ENCODE measurements at regions of chr4 and their contacts with region 1.

Region 1: GRCh38 chr4:108570993-108571569 is 49.3 kb upstream of the RPL34 start:
- DNase-seq: no peak
- H3K4me3 ChIP-seq: no peak overlapping the region
- H3K27ac ChIP-seq: no peak overlapping the region
- H3K4me1 ChIP-seq: peaks cover 0 to 4% (median 1%) of the 10 kb centered on the region in 6 donors
- H3K27me3 ChIP-seq: peaks cover 0 to 4% (median 0%) of the 10 kb centered on the region in 7 donors
- CTCF ChIP-seq: no peak
- POLR2A ChIP-seq: no peak

Region 2: DNA sequence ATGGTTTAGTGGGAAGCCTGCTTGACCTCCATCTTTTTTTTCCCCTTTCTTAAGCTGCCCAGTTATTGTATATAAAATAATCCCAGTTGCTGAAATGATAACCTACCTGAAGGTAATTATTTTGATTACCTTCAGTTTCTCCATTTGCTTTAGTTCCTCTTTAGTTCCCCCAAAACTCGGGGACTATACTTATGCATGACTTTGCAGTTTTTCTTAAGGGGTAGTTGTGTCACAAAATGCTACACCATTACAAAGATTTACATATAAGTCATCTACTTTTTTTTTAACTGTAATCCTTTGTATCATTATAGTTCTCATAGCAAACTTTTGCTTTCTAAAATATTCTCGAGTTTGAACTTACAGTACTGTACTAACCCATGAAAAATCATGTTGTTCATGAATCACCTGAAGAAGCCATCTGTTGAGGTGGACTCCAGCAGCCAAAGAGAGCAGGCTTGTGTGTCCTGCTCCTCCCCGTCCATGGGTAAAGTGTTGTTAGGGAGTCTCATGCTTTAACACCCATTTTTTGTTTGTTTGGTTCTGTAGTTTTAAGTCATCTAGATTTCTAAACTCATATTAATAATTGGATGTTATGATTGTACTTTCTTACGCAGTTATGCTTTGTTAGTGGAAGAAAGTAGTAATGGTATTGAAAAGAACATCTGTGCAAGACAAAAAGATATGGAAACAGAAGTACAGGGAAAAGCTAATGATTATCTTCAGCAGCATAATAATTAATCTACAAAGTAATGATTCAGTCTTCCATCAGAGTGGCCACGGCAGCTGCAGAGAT is 546.8 kb before region 1 on chr4:
- intact Hi-C with region 1: loop called (anchors 5 kb)
- DNase-seq: no peak
- H3K4me3 ChIP-seq: no peak overlapping the region
- H3K27ac ChIP-seq: no peak overlapping the region
- H3K4me1 ChIP-seq: no peaks in the 10 kb centered on the region
- H3K27me3 ChIP-seq: no peaks in the 10 kb centered on the region
- CTCF ChIP-seq: no peak
- POLR2A ChIP-seq: no peak

Region 3: DNA sequence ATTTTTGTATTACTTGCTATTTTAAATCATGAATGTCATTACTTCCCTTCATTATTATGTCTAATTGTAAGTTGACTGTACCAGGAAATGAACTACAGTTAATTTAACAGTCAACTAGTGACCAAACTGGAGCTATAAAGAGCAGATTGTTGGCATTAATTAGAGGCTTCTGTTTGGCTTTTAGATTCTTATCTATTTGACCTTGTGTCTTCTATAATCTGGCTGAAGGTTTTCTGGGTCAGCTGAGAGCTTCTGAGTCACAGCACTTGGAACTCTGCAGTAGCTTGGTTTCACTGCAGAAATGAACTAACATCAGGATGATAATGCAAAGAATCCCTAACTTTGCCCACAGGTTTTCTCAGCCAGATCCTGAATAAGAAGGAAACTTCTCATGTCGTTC is 233.2 kb before region 1 on chr4:
- intact Hi-C with region 1: no loop called
- DNase-seq: no peak
- H3K4me3 ChIP-seq: no peak overlapping the region
- H3K27ac ChIP-seq: no peak overlapping the region
- H3K4me1 ChIP-seq: peaks cover 0 to 7% (median 0%) of the 10 kb centered on the region in 6 donors
- H3K27me3 ChIP-seq: no peaks in the 10 kb centered on the region
- CTCF ChIP-seq: no peak
- POLR2A ChIP-seq: no peak

Region 4: DNA sequence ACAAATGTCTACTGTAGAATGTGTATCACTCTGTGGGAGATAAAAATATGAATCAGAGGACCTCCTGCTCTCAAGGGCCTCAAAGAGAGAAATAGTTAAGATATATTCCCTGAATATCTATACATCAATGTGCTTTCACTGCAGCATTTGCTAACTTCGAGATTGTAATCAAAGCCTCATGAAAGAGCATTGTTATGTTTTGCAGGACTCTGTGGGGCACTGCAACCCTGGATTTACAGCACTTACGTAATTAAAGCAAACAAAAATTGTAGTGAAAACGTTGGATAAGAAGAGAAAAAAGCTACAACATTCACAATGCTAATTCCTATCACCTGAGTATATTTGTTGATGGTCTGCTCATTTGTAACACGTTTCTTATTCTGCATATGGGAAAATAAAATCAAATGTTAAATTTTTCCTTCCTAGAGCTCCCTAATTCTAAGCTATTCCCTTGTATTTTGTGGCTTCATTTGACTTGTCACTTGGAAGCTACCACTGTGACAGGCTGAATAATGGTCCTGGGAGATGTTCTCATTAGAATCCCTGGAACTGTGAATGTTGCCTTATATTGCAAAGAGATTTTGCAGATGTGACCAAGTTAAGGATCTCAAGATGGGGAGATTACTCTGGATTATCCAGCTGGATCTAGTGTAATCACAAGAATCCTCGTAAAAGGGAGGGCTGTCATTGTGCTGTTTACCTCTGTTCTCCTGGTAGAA is 143.9 kb after region 1 on chr4:
- intact Hi-C with region 1: no loop called
- DNase-seq: no peak
- H3K4me3 ChIP-seq: no peak overlapping the region
- H3K27ac ChIP-seq: no peak overlapping the region
- H3K4me1 ChIP-seq: no peaks in the 10 kb centered on the region
- H3K27me3 ChIP-seq: no peaks in the 10 kb centered on the region
- CTCF ChIP-seq: no peak
- POLR2A ChIP-seq: no peak

Region 5: DNA sequence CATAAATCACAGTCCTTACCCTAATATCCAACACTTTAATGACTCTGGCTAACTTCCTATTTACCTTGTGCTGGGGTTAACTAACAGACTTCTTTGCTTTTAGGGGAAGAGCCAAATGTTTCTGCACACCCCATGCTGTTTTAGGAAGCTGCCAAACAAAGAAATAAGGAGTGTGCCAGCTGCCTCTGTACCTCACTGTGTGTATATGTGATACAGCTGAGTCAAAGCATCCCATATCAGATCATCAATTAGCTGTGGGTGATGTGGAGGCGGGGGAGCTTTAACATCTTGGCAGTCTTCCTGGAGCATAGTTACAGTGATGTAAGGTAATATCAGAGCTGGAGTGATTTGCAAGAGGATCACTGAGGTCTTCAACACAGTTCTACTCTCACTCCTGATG is 636.0 kb after region 1 on chr4:
- intact Hi-C with region 1: no loop called
- DNase-seq: no peak
- H3K4me3 ChIP-seq: no peak overlapping the region
- H3K27ac ChIP-seq: no peak overlapping the region
- H3K4me1 ChIP-seq: no peaks in the 10 kb centered on the region
- H3K27me3 ChIP-seq: no peaks in the 10 kb centered on the region
- CTCF ChIP-seq: no peak
- POLR2A ChIP-seq: no peak

Measured in spleen (tissue), 13 donors.